ENCODE measurements at regions of chr11 and their contacts with region 1.

Region 1: GRCh38 chr11:36492724-36493304 is 17.3 kb downstream of the TRAF6 start:
- DNase-seq: peak in 2 of 4 donors; percentile 32 to 50
- ATAC-seq: peak; percentile 83
- H3K4me3 ChIP-seq: no peak overlapping the region
- H3K27ac ChIP-seq: no peak overlapping the region
- H3K4me1 ChIP-seq: peaks cover 0 to 8% of the 10 kb centered on the region in 2 donors
- H3K27me3 ChIP-seq: no peaks in the 10 kb centered on the region
- CTCF ChIP-seq: peak; percentile 69 to 85

Region 2: DNA sequence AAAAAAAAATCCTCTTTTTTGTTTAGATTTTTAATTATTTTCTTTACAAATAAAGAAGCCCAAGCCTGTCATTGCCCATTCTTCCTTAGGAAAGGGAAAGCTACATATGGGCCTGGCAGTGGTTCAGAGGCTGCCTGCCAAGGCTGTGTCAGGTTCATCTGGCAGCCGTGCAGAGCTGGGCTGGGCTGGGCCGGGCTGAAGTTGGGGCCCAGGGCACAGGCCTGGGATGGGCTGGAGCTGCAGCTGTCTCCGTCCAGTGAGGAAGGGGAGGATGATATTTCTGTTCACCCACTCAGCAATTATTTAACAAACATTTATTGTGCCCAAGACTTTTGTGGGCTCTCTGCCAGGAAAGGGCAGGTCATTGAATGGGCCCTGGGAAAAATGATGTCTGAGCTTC is 192.2 kb before region 1 on chr11:
- intact Hi-C with region 1: loop called in 1 of 2 experiments (anchors 5 kb)
- DNase-seq: peak in 3 of 4 donors; percentile 53 to 73 (median 71)
- ATAC-seq: peak; percentile 82
- H3K4me3 ChIP-seq: no peak overlapping the region
- H3K27ac ChIP-seq: no peak overlapping the region
- H3K4me1 ChIP-seq: peaks cover 0 to 9% of the 10 kb centered on the region in 2 donors
- H3K27me3 ChIP-seq: no peaks in the 10 kb centered on the region
- CTCF ChIP-seq: no peak

Measured in left lung (tissue), 14 donors.